ENCODE measurements at regions of chr19 and their contacts with region 1.

Region 1: GRCh38 chr19:45451131-45451849 is 16.5 kb upstream of the FOSB start:
- DNase-seq: peak; percentile 55
- H3K4me3 Mint-ChIP-seq: peak overlapping the region; percentile 78
- H3K27ac Mint-ChIP-seq: peak overlapping the region; percentile 83
- H3K4me1 Mint-ChIP-seq: peaks cover 47% of the 10 kb centered on the region
- H3K27me3 Mint-ChIP-seq: peaks cover 4% of the 10 kb centered on the region

Region 2: DNA sequence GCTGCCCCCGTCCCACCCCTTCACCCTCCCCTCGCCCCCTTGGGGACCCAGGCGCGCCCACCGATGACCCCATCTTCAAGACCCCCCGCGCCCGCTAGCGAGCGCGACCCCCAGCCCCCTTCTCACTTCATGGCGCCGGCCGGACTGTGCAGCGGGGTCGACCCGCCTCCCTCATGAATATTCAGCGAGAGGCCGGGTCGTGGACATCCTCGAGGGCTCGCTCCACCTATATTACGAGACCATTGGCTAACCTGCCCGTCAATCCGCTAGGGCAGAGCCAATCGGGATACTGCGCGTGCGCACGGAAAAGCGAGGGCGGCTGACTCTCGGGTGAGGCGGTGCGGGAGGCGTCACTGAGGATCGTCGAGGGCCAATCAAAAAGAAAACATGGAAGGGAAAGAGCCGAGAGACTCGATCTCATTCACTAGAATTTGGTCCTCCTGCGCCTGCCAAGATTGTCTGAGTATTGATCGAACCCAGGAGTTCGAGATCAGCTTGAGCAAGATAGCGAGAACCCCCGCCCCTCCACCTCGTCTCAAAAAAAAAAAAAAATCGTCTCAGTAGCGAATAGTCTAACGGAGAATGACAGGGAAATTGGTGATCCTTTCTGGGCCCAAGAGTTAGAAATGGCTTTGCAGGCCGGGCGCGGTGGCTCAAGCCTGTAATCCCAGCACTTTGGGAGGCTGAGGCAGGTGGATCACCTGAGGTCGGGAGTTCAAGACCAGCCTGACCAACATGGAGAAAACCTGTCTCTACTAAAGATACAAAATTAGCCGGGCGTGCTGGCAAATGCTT is 80.7 kb before region 1 on chr19 and contains the start of gene ERCC2:
- intact Hi-C with region 1: loop called (anchors 1 kb)
- DNase-seq: peak; percentile 100
- H3K4me3 Mint-ChIP-seq: peak within 1 kb of the TSS; percentile 87
- H3K27ac Mint-ChIP-seq: peak within 1 kb of the TSS; percentile 99
- H3K4me1 Mint-ChIP-seq: peaks cover 14% of the 10 kb centered on the region
- H3K27me3 Mint-ChIP-seq: no peaks in the 10 kb centered on the region
- total RNA-seq, gene ERCC2: 32.6 and 34.5 TPM in 2 replicates

Region 3: DNA sequence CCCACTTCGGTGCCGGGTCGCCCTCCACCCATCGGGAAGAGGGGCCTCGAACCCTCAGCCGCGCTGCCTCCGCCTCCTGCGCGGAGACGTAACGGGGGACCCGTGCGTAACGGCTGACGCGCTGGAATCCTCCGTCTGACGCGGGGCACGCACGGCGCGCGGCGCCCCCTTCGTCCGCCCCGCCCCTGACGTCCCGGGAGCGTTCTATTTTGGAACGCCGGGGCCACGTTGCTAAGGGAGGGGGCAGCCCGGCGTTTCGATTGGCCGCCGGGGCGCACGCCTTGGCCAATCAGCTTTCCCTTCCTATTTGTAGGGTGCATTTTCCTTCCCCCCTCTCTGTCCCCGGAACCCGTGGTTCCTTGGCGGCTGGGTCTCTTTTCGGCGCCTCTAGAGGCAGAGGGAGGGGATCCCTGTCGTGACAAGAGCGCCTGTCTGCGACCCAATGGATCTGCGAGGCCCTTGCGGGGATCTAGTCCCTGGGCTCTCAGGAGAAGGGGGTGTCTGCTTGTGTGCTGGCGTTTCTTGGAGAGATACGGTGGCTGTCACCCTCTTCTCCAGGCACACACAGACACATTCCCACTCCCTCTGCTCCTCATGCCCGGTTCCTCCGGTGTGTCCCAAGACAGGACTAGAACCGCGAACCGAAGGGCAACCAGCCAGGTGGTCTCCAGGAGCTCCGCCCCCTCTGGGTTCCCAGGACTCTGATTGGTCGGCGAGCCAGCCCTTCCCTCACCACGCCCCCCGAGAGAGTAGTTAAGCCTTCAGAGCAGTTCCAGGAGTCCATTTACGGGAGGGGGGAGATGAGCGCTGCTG is 18.0 kb after region 1 on chr19:
- intact Hi-C with region 1: loop called (anchors 1 kb)
- DNase-seq: peak; percentile 93
- H3K4me3 Mint-ChIP-seq: peak overlapping the region; percentile 86
- H3K27ac Mint-ChIP-seq: peak overlapping the region; percentile 91
- H3K4me1 Mint-ChIP-seq: peaks cover 23% of the 10 kb centered on the region
- H3K27me3 Mint-ChIP-seq: peaks cover 44% of the 10 kb centered on the region

Region 4: GRCh38 chr19:45496349-45496953 is 45.2 kb after region 1 on chr19:
- intact Hi-C with region 1: no loop called
- DNase-seq: peak; percentile 38
- H3K4me3 Mint-ChIP-seq: peak overlapping the region; percentile 60
- H3K27ac Mint-ChIP-seq: no peak overlapping the region
- H3K4me1 Mint-ChIP-seq: peaks cover 39% of the 10 kb centered on the region
- H3K27me3 Mint-ChIP-seq: peaks cover 24% of the 10 kb centered on the region

Measured in activated T-helper 2 cell treated with anti-CD3 and anti-CD28 coated beads, Interferon-gamma antibody, Interleukin-2, Interleukin-4, amounts not matched to agents 10 μg/mL and 5 μg/mL and 100 μg/mL, durations not matched to agents 14 hours and 24 hours and 36 hours (primary cell).